WTC11 (cell line): ENCODE measurements at regions of chr6 and their contacts with region 1.

Region 1: DNA sequence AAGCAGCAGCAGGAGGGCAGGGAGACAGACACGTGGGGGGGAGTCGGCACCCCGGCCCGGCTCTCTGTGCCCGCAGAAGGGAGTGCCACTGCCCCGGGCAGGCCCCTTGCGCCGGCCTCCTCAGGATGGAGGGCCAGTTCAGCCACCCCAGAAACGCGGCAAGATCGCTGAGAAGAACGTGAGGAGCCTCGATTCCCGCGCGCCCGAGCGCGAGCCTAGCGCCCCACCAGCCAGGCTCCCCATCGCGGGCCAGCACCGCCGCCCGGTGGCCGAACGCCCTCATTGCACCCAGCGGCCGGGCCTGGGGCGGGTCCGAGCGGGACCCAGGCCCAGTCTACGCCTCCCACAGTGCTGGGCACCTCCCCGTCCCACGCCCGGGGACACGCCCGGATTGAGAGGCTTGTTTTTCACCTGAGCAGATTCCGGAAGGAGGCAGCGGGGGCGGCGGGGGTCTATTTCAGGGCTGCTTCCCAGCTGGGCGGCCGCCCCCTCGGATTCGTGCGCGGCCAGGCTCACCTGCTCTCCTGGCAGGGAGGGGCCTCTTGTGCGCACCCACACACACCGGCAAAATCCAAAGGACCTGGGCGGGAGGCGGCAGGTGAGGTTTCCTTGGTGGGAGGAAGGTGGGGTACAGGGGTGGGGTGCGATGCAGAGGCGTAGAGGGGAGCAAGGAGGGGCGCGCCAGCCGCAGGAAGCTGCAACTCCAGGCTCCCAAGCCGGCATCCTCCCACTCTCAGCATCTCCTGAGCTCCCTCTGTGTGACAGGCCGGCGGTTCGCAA is 9.0 kb upstream of the GRM4 start:
- DNase-seq: peak; percentile 87
- ATAC-seq: peak; percentile 78
- H3K4me3 Mint-ChIP-seq: peak overlapping the region; percentile 64
- H3K27ac Mint-ChIP-seq: no peak overlapping the region
- H3K4me1 Mint-ChIP-seq: peaks cover 40% of the 10 kb centered on the region
- H3K27me3 Mint-ChIP-seq: peaks cover 64% of the 10 kb centered on the region
- CTCF ChIP-seq: peak; percentile 97

Region 2: GRCh38 chr6:33958526-33959333 is 196.1 kb before region 1 on chr6:
- CTCF ChIA-PET with region 1: interaction called, 27 read pairs
- POLR2A ChIA-PET with region 1: no interaction called
- DNase-seq: peak; percentile 75
- ATAC-seq: peak; percentile 74
- H3K4me3 Mint-ChIP-seq: no peak overlapping the region
- H3K27ac Mint-ChIP-seq: no peak overlapping the region
- H3K4me1 Mint-ChIP-seq: peaks cover 24% of the 10 kb centered on the region
- H3K27me3 Mint-ChIP-seq: peaks cover 3% of the 10 kb centered on the region
- CTCF ChIP-seq: peak; percentile 57

Region 3: GRCh38 chr6:34067814-34068213 is 87.0 kb before region 1 on chr6:
- CTCF ChIA-PET with region 1: interaction called, 22 read pairs
- POLR2A ChIA-PET with region 1: no interaction called
- DNase-seq: no peak
- ATAC-seq: peak; percentile 38
- H3K4me3 Mint-ChIP-seq: no peak overlapping the region
- H3K27ac Mint-ChIP-seq: no peak overlapping the region
- H3K4me1 Mint-ChIP-seq: peaks cover 2% of the 10 kb centered on the region; the same call in 1 of the 2 replicates
- H3K27me3 Mint-ChIP-seq: no peaks in the 10 kb centered on the region
- CTCF ChIP-seq: no peak

Region 4: GRCh38 chr6:34074064-34074742 is 80.7 kb before region 1 on chr6:
- CTCF ChIA-PET with region 1: interaction called, 22 read pairs
- POLR2A ChIA-PET with region 1: no interaction called
- DNase-seq: no peak
- ATAC-seq: peak; percentile 91
- H3K4me3 Mint-ChIP-seq: no peak overlapping the region
- H3K27ac Mint-ChIP-seq: no peak overlapping the region
- H3K4me1 Mint-ChIP-seq: peaks cover 28% of the 10 kb centered on the region
- H3K27me3 Mint-ChIP-seq: no peaks in the 10 kb centered on the region
- CTCF ChIP-seq: no peak

Region 5: GRCh38 chr6:34120953-34121675 is 33.7 kb before region 1 on chr6:
- CTCF ChIA-PET with region 1: interaction called, 11 read pairs
- POLR2A ChIA-PET with region 1: no interaction called
- DNase-seq: peak; percentile 37
- ATAC-seq: peak; percentile 75
- H3K4me3 Mint-ChIP-seq: no peak overlapping the region
- H3K27ac Mint-ChIP-seq: no peak overlapping the region; the same call in 1 of the 2 replicates
- H3K4me1 Mint-ChIP-seq: peaks cover 21% of the 10 kb centered on the region
- H3K27me3 Mint-ChIP-seq: no peaks in the 10 kb centered on the region; the same call in 1 of the 2 replicates
- CTCF ChIP-seq: no peak

Region 6: DNA sequence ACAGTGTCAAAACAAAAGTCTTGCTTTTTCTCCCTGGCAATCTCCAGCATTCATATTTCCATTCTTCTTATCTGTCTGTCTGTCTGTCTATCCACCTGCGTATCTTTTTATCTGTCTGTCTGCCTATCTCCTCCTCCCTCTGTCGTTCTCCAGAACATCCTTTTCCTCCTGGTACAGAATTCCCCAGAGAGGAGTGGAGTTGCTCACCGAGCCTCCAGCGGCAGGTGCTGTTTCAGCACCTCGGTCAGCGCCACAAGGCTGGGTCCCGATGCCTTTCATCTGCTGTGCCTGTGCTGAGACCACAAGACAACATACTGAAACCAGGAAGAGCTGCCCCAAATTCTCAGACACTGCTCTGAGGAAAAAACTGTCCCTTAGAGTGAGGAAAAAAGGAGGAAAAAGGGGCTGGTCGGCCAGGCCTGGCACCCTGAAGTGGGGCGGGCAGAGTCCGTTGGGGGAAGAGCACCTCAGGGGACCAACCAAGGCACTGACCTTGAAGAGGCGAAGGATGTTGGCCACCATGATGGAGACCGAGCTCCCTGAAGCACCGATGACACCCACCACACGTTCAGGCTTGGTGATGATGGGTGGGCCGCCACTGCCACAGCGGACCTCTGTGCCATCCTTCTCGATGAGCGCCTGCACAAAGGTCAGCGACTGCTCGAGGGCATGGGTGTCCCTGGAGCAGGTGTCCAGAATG is 22.2 kb before region 1 on chr6:
- CTCF ChIA-PET with region 1: interaction called, 10 read pairs
- POLR2A ChIA-PET with region 1: no interaction called
- DNase-seq: peak; percentile 89
- ATAC-seq: peak; percentile 29
- H3K4me3 Mint-ChIP-seq: peak overlapping the region; percentile 64
- H3K27ac Mint-ChIP-seq: peak overlapping the region; percentile 96
- H3K4me1 Mint-ChIP-seq: peaks cover 86% of the 10 kb centered on the region
- H3K27me3 Mint-ChIP-seq: no peaks in the 10 kb centered on the region
- CTCF ChIP-seq: no peak